Activated CD8-positive, alpha-beta T cell treated with anti-CD3 and anti-CD28 coated beads, Interleukin-2, amount 10 ng/mL, durations not matched to agents 7 days and 5 days (primary cell): ENCODE measurements at regions of chr4 and their contacts with region 1.

Region 1: DNA sequence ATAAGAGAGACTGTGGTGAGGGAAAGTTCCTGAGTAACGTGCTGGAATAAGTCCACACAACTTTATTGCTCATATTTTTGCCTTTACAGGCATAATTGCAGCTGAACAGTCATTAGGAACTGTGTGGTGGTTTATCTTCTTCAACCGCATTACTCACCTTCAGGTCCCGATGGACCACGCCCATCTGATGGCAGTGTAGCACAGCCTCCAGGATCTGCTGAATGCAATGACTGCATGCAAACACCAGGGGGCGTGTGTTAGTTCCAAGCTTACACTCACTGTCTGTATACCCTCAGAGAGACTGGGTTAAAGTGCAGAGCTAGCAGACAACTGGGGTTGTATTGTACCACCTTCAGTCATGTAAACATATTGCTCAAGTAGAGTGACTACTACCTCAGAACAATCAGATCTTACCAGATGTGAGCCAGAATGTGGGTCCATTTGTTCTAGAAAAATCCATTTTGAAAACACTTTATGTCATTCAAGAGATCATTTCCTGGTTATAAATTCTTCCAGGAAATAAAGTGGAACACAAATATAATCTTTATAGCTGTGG is 214.0 kb downstream of the CAMK2D start:
- DNase-seq: peak; percentile 95
- ATAC-seq: peak; percentile 100
- H3K4me3 Mint-ChIP-seq: peak overlapping the region; percentile 18
- H3K27ac Mint-ChIP-seq: peak overlapping the region; percentile 4
- H3K4me1 Mint-ChIP-seq: peaks cover 15% of the 10 kb centered on the region
- H3K27me3 Mint-ChIP-seq: no peaks in the 10 kb centered on the region

Region 2: GRCh38 chr4:113564493-113564892 is 16.9 kb after region 1 on chr4:
- CTCF ChIA-PET with region 1: interaction called, 49 read pairs
- POLR2A ChIA-PET with region 1: interaction called, 7 read pairs
- DNase-seq: no peak
- ATAC-seq: no peak
- H3K4me3 Mint-ChIP-seq: peak overlapping the region; percentile 25
- H3K27ac Mint-ChIP-seq: peak overlapping the region; percentile 71
- H3K4me1 Mint-ChIP-seq: peaks cover 47% of the 10 kb centered on the region
- H3K27me3 Mint-ChIP-seq: no peaks in the 10 kb centered on the region

Region 3: GRCh38 chr4:113576947-113577678 is 29.5 kb after region 1 on chr4:
- CTCF ChIA-PET with region 1: interaction called, 11 read pairs
- POLR2A ChIA-PET with region 1: interaction called, 3 read pairs
- DNase-seq: no peak
- ATAC-seq: no peak
- H3K4me3 Mint-ChIP-seq: no peak overlapping the region
- H3K27ac Mint-ChIP-seq: no peak overlapping the region
- H3K4me1 Mint-ChIP-seq: peaks cover 41% of the 10 kb centered on the region
- H3K27me3 Mint-ChIP-seq: no peaks in the 10 kb centered on the region

Region 4: DNA sequence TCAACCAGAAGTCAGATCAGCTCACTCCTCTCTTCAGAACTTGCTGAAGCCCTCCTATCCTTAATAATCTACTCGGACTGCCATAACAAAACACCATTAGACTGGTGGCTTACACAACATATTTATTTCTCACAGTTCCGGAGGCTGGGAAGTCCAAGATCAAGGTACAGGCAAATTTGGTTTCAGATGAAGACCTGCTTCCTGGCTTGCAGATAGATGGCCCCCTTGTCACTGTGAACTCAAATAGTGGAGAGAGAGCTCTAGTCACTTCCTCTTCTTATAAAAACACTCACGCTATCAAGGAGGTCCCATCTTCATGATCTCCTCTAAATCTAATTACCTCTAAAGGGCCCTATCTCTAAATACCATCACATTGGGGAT is 88.9 kb after region 1 on chr4:
- CTCF ChIA-PET with region 1: interaction called, 29 read pairs
- POLR2A ChIA-PET with region 1: no interaction called
- DNase-seq: peak; percentile 51
- ATAC-seq: peak; percentile 85
- H3K4me3 Mint-ChIP-seq: peak overlapping the region; percentile 64
- H3K27ac Mint-ChIP-seq: peak overlapping the region; percentile 88
- H3K4me1 Mint-ChIP-seq: peaks cover 45% of the 10 kb centered on the region
- H3K27me3 Mint-ChIP-seq: no peaks in the 10 kb centered on the region